Dorsolateral prefrontal cortex (tissue), 120 donors: ENCODE measurements at regions of chr9 and their contacts with region 1.

Region 1: DNA sequence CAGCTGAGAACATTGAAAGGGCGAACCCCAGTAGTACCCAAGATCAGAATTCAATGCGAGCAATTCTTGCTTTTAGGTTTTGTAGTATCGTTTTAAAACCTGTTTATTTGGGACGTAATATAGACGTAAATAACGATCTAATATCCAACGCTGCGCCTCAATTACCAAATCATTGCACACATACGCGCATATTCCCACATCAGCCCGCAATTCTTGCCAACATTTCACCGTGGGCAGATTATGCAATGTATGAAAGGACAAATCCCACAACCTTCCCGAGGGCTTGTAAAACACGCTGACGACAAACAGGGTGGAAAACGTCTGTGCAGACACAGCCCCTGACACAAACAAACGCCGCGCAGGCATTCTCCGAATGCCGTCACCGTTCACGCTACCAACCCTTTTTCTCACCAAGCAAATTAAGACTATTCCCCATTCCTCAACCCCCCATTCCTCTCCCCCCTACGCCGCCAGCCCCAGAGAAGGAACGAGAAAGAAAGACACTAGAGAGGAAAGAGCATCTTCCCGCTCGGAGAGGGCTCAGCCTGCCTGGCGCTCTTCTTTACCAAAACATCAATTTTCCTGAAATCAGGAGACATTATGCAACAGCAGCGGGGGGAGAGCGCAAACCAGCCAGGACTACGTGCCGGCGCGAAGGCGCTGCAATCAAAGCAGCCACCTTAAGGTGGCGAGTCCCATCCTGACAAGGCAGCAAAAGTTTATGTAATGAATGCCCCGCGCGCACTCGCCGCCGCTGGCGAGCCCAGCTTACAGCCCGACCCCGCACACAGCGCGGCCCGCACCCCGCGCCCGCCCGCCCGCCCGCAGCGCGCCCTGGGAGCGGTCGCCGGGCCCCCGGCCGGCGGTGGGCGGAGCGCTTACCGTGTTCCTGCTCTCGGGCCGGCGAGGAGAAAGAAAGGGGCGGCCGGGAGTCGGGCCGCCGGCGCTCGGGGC is 597 bp downstream of the NFIL3 start:
- DNase-seq: peak; percentile 37 to 74 (median 61)
- H3K4me3 ChIP-seq: peak overlapping the region; percentile 47 to 86 (median 73)
- H3K27ac ChIP-seq: peak overlapping the region in 58 of 59 donors; percentile 3 to 97 (median 88)
- H3K27me3 ChIP-seq: no peaks in the 10 kb centered on the region
- CTCF ChIP-seq: peak in 27 of 56 donors; percentile 2 to 45 (median 23)

Region 2: GRCh38 chr9:90189306-90189705 is 1233.7 kb before region 1 on chr9:
- intact Hi-C with region 1: no loop called
- DNase-seq: no peak
- H3K4me3 ChIP-seq: no peak overlapping the region
- H3K27ac ChIP-seq: no peak overlapping the region
- H3K27me3 ChIP-seq: peaks cover 0 to 8% (median 0%) of the 10 kb centered on the region in 45 donors
- CTCF ChIP-seq: no peak

Region 3: GRCh38 chr9:91117959-91118703 is 304.9 kb before region 1 on chr9:
- intact Hi-C with region 1: loop called in 1 of 2 experiments (anchors 10 kb)
- DNase-seq: peak in 9 of 10 donors; percentile 41 to 75 (median 57)
- H3K4me3 ChIP-seq: peak overlapping the region in 58 of 59 donors; percentile 21 to 68 (median 43)
- H3K27ac ChIP-seq: peak overlapping the region in 41 of 59 donors; percentile 8 to 75 (median 51)
- H3K27me3 ChIP-seq: no peaks in the 10 kb centered on the region
- CTCF ChIP-seq: no peak

Region 4: GRCh38 chr9:91193658-91194391 is 229.2 kb before region 1 on chr9:
- intact Hi-C with region 1: loop called (anchors 5 kb)
- DNase-seq: peak; percentile 46 to 77 (median 67)
- H3K4me3 ChIP-seq: peak overlapping the region; percentile 35 to 80 (median 65)
- H3K27ac ChIP-seq: peak overlapping the region; percentile 42 to 98 (median 90)
- H3K27me3 ChIP-seq: no peaks in the 10 kb centered on the region
- CTCF ChIP-seq: peak in 11 of 56 donors; percentile 4 to 28 (median 13)

Region 5: DNA sequence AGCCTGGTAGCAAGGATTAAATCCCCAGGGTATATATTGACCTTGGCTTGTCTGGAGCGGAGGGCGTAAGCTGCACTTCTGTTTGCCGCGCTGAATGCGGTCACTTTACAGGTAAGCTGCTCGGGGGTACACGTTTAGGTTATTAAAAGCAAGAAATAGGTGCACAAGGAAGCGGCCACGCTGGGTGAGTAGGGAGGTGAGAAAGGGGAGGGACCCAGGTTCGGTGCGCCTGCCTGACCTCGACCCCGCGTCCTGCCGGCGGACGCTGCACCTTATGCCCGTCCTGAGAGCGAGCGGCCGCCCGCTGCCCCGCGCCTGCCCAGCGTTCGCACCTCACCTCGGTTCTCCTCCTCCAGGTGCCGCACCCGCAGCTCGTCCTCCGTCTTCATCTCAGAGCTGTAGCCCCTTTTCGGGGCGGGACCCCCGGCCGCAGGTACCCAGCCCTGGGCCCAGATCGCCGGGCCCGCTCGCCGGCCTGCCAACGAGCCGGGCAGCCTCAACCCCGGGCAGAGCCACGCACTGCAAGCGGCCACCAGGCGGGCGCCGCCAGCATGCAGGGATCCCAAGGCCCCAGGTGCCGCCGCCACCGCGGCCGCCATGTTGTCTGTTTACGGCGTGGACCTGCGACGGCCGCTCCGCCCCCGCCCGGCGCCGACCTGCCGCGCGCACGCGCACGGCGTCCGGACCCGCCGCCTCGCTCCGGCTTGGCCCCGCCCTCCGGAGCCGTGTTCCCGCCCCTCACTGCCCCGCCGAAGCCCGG is 61.6 kb before region 1 on chr9 and contains the start of gene AUH:
- intact Hi-C with region 1: loop called (anchors 2 kb)
- DNase-seq: peak; percentile 71 to 96 (median 80)
- H3K4me3 ChIP-seq: peak within 1 kb of the TSS; percentile 64 to 100 (median 98)
- H3K27ac ChIP-seq: peak within 1 kb of the TSS; percentile 66 to 97 (median 91)
- H3K27me3 ChIP-seq: no peaks in the 10 kb centered on the region
- CTCF ChIP-seq: peak in 22 of 56 donors; percentile 7 to 48 (median 29)
- total RNA-seq, gene AUH: 21.9 to 46.8 (median 35.4) TPM

Region 6: DNA sequence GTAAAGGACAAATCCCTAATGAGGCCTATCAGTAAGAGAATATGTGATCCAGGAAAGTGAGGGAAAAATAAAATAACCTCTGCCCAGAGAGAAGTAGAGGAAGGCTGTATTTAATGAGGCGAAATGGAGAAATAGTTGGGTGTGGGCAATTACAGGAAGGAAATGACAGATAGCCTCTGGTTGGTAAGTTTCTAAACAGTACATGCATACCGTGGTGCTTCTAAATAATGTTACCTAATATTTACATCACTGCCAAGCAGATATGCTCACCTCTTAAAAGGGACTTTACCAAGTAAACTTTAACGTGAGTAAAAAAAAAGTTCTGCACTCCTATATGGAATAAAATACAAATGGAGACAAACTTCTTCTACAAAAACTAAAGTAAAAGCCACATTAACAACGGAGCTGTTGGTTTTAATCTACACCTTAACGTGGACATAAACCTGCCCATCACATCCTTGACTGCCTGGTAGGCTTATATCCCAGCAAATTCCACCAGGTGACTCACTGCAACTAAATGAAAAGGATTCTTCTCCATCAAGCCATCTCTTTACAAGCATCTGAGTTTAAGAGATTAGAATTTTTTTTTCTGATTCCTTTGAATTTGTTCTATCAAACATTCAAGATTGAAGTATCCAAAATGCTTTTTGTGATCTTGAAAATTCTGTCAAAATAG is 11.8 kb before region 1 on chr9:
- intact Hi-C with region 1: no loop called
- DNase-seq: no peak
- H3K4me3 ChIP-seq: no peak overlapping the region
- H3K27ac ChIP-seq: no peak overlapping the region
- H3K27me3 ChIP-seq: no peaks in the 10 kb centered on the region
- CTCF ChIP-seq: no peak